Heart right ventricle (tissue), 16 donors: ENCODE measurements at regions of chr12 and their contacts with region 1.

Region 1: DNA sequence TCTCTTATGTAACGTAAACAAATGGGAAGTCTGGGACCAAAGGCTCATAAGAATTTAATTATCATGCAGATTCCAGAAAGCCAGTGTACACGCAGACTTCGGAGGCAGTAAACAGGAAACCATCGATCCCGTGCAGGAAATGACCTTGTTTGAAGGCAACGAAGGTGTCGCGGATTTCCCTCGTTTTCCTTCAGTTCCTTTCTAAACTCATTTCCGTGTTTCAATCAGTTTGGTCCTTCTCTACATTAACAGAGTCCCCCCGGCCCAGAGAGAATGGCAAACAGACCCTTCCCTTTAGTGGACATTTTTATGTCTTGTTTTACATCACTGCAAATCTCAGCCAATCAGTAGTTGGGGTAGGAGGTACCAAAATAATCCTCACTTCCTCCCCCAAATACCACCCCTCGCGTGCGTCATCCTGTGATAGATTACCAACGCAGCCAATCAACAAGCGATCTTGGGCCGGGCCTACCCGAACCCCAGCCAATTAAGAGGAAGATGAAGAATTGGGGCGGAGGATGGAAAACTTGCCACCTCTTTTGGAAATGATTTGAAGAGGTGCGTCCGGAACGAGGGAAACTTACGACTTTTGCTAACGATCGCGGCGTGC is 6.1 kb upstream of the FOXJ2 start:
- DNase-seq: peak; percentile 89 to 99
- ATAC-seq: peak; percentile 97 to 99 (median 98)
- H3K4me3 ChIP-seq: peak overlapping the region; percentile 53 to 89 (median 74)
- H3K27ac ChIP-seq: peak overlapping the region; percentile 97 to 100 (median 100)
- H3K4me1 ChIP-seq: peaks cover 0 to 15% (median 2%) of the 10 kb centered on the region in 9 donors
- H3K27me3 ChIP-seq: no peaks in the 10 kb centered on the region
- CTCF ChIP-seq: no peak

Region 2: DNA sequence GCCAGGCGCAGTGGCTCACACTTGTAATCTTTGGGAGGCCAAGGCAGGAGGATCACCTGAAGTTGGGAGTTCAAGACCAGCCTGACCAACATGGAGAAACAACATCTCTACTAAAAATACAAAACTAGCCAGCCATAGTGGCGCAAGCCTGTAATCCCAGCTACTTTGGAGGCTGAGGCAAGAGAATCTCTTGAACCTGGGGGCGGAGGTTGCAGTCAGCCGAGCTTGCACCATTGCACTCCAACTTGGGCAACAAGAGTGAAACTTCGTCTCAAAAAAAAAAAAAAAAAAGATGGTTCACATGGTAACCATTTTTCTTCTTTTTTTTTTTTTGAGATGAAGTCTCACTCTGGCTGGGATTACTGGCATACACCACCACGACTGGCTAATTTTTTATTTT is 189.0 kb before region 1 on chr12:
- intact Hi-C with region 1: no loop called
- DNase-seq: no peak
- ATAC-seq: no peak
- H3K4me3 ChIP-seq: no peak overlapping the region
- H3K27ac ChIP-seq: no peak overlapping the region
- H3K4me1 ChIP-seq: peaks cover 0 to 1% (median 0%) of the 10 kb centered on the region in 9 donors
- H3K27me3 ChIP-seq: peaks cover 0 to 15% (median 9%) of the 10 kb centered on the region in 7 donors
- CTCF ChIP-seq: no peak

Region 3: GRCh38 chr12:7959701-7960121 is 66.7 kb before region 1 on chr12:
- intact Hi-C with region 1: loop called in 1 of 10 experiments (anchors 5 kb)
- DNase-seq: no peak
- ATAC-seq: peak in 3 of 8 donors; percentile 21 to 28 (median 27)
- H3K4me3 ChIP-seq: peak overlapping the region in 2 of 10 donors; percentile 53 to 59
- H3K27ac ChIP-seq: peak overlapping the region in 4 of 10 donors; percentile 78 to 93 (median 85)
- H3K4me1 ChIP-seq: peaks cover 0 to 52% (median 4%) of the 10 kb centered on the region in 9 donors
- H3K27me3 ChIP-seq: no peaks in the 10 kb centered on the region
- CTCF ChIP-seq: no peak

Region 4: GRCh38 chr12:7970475-7971252 is 55.7 kb before region 1 on chr12:
- intact Hi-C with region 1: loop called in 1 of 10 experiments (anchors 2 kb)
- DNase-seq: peak; percentile 90
- ATAC-seq: peak; percentile 97 to 99 (median 98)
- H3K4me3 ChIP-seq: peak overlapping the region; percentile 41 to 65 (median 55)
- H3K27ac ChIP-seq: peak overlapping the region; percentile 79 to 94 (median 86)
- H3K4me1 ChIP-seq: peaks cover 0 to 39% (median 16%) of the 10 kb centered on the region in 9 donors
- H3K27me3 ChIP-seq: peaks cover 0 to 6% (median 0%) of the 10 kb centered on the region in 7 donors
- CTCF ChIP-seq: peak in 2 of 9 donors; percentile 15 to 18

Region 5: DNA sequence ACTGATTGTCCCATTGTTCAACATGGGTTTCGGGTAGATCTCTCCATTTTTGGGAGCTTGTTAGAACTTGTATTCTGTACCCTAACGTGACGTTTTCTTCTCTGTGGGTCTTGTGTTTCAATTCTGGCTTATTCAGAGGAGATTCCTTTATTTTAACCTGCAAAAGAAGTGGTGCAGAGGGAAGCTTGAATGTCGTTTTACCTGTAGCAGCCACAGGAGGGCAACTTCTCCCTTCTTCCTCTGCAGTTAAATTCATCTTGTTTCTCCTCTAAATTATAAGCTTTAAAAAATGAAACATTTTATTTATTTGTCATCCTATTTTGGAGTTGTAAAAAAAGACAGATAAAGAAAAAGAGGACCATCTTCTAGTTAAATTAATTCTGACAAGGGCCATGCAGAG is 473.2 kb after region 1 on chr12:
- intact Hi-C with region 1: no loop called
- DNase-seq: no peak
- ATAC-seq: no peak
- H3K4me3 ChIP-seq: no peak overlapping the region
- H3K27ac ChIP-seq: no peak overlapping the region
- H3K4me1 ChIP-seq: no peaks in the 10 kb centered on the region
- H3K27me3 ChIP-seq: peaks cover 0 to 26% (median 10%) of the 10 kb centered on the region in 7 donors
- CTCF ChIP-seq: peak in 1 of 9 donors; percentile 12